Heart right ventricle (tissue), 16 donors: ENCODE measurements at regions of chrX and their contacts with region 1.

Region 1: GRCh38 chrX:148133105-148133725 is 152.1 kb downstream of the FMR1NB start:
- DNase-seq: no peak
- ATAC-seq: no peak
- H3K4me3 ChIP-seq: no peak overlapping the region
- H3K27ac ChIP-seq: no peak overlapping the region
- H3K4me1 ChIP-seq: no peaks in the 10 kb centered on the region
- H3K27me3 ChIP-seq: no peaks in the 10 kb centered on the region
- CTCF ChIP-seq: peak in 6 of 9 donors; percentile 4 to 33 (median 14)

Region 2: GRCh38 chrX:148146121-148146520 is 12.9 kb after region 1 on chrX:
- intact Hi-C with region 1: no loop called
- DNase-seq: no peak
- ATAC-seq: no peak
- H3K4me3 ChIP-seq: no peak overlapping the region
- H3K27ac ChIP-seq: no peak overlapping the region
- H3K4me1 ChIP-seq: no peaks in the 10 kb centered on the region
- H3K27me3 ChIP-seq: no peaks in the 10 kb centered on the region
- CTCF ChIP-seq: no peak

Region 3: DNA sequence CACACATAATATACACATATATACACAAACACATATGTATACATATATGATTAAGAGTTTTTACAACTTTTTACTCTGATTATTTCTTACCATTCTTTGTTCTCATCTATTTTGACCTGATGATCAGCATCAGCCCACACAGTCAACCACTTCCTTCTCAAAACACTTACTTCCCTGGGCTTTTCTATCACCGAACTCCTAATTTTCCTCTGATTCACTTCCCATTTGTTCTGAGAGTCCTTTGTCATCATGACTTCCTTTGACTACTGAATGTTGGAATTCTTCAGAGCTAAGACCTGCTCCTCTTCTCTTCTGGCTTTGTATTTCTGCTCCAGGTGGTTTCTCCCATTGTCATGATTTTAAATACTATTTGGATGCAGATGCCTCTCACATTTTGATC is 157.7 kb after region 1 on chrX:
- intact Hi-C with region 1: no loop called
- DNase-seq: no peak
- ATAC-seq: no peak
- H3K4me3 ChIP-seq: no peak overlapping the region
- H3K27ac ChIP-seq: no peak overlapping the region
- H3K4me1 ChIP-seq: no peaks in the 10 kb centered on the region
- H3K27me3 ChIP-seq: no peaks in the 10 kb centered on the region
- CTCF ChIP-seq: no peak

Region 4: DNA sequence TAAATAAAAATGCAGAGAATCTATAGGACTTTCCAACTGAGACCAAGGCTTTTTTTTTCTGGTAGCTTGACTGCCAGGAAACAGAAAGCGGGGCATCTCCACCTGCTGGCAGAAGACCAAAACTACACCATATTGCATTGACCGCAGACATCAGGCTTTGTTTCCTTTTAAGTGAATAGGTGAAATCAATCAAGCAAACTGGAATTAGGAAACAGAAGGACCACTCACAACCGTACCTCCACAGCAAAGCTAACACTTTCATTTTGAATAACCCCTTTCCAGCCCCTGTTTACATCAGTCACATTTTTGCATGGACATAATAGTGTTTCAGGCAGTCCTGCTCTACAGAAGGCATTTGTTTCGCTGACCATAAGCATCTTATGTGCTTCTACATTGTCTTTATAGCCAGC is 1153.7 kb after region 1 on chrX:
- intact Hi-C with region 1: loop called in 1 of 10 experiments (anchors 10 kb)
- DNase-seq: peak in 1 of 2 donors; percentile 4
- ATAC-seq: no peak
- H3K4me3 ChIP-seq: no peak overlapping the region
- H3K27ac ChIP-seq: no peak overlapping the region
- H3K4me1 ChIP-seq: no peaks in the 10 kb centered on the region
- H3K27me3 ChIP-seq: peaks cover 0 to 14% (median 0%) of the 10 kb centered on the region in 7 donors
- CTCF ChIP-seq: peak; percentile 14 to 74 (median 56)

Region 5: GRCh38 chrX:149470955-149471354 is 1337.7 kb after region 1 on chrX:
- intact Hi-C with region 1: loop called in 1 of 10 experiments (anchors 10 kb)
- DNase-seq: peak; percentile 70 to 81
- ATAC-seq: peak; percentile 84 to 96 (median 94)
- H3K4me3 ChIP-seq: peak overlapping the region in 1 of 10 donors; percentile 26
- H3K27ac ChIP-seq: no peak overlapping the region
- H3K4me1 ChIP-seq: peaks cover 0 to 7% (median 0%) of the 10 kb centered on the region in 9 donors
- H3K27me3 ChIP-seq: peaks cover 0 to 11% (median 0%) of the 10 kb centered on the region in 7 donors
- CTCF ChIP-seq: peak; percentile 58 to 96 (median 84)